ENCODE measurements at regions of chr11 and their contacts with region 1.

Region 1: GRCh38 chr11:116835791-116836631 is 1.4 kb downstream of the APOA1 start:
- DNase-seq: peak; percentile 91
- ATAC-seq: peak; percentile 96
- H3K4me3 Mint-ChIP-seq: peak overlapping the region; percentile 73
- H3K27ac Mint-ChIP-seq: peak overlapping the region; percentile 76
- H3K4me1 Mint-ChIP-seq: peaks cover 20% of the 10 kb centered on the region
- H3K27me3 Mint-ChIP-seq: no peaks in the 10 kb centered on the region

Region 2: GRCh38 chr11:116787786-116788486 is 48.1 kb before region 1 on chr11 and contains the start of gene ZPR1:
- CTCF ChIA-PET with region 1: interaction called, 211 read pairs
- POLR2A ChIA-PET with region 1: interaction called, 13 read pairs
- DNase-seq: peak; percentile 89
- ATAC-seq: peak; percentile 84
- H3K4me3 Mint-ChIP-seq: peak within 1 kb of the TSS; percentile 94
- H3K27ac Mint-ChIP-seq: peak within 1 kb of the TSS; percentile 92
- H3K4me1 Mint-ChIP-seq: peaks cover 49% of the 10 kb centered on the region
- H3K27me3 Mint-ChIP-seq: peaks cover 6% of the 10 kb centered on the region
- total RNA-seq, gene ZPR1: 60.5 to 62.0 TPM

Region 3: GRCh38 chr11:116847612-116848011 is 11.6 kb after region 1 on chr11:
- CTCF ChIA-PET with region 1: interaction called, 95 read pairs
- POLR2A ChIA-PET with region 1: interaction called, 57 read pairs
- DNase-seq: no peak
- ATAC-seq: no peak
- H3K4me3 Mint-ChIP-seq: no peak overlapping the region
- H3K27ac Mint-ChIP-seq: no peak overlapping the region
- H3K4me1 Mint-ChIP-seq: peaks cover 31% of the 10 kb centered on the region
- H3K27me3 Mint-ChIP-seq: no peaks in the 10 kb centered on the region

Region 4: DNA sequence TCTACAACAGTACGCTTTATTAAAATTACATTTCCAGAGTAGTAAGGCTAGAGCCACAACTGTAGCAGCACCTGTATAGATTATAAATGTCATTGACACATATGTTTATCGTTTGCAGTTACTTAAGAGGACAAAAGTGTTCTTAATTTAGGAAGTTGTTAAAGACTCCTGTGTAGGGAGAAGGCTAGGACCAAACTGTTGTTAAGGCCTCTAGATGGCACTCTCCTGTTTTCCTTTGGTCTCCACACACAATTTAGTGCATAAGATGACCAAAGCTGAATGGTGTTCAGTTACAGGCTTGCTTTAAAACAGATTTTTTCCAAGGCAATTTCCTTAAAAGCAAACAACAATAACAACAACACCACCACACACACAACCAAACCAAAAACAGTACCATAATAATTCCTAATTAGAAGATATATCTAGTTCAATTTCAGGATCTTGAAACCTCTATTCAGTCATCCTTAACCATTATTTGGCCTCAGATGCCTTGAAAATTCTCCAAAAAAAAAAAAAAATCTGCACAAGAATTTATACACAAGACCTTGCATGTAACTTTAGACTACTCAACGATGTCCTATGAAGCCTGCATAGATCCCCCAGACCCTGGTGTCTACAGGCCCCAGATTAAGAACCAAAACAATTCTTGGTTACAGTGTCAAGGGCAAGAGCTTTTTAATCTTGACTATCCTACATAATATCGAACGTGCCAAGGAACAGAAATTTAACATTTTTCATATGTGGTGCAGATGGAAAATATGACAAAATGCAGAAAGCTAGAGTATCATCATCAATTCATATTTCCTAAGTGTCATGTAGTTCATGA is 44.0 kb after region 1 on chr11:
- CTCF ChIA-PET with region 1: interaction called, 17 read pairs
- POLR2A ChIA-PET with region 1: no interaction called
- DNase-seq: peak; percentile 55
- ATAC-seq: peak; percentile 75
- H3K4me3 Mint-ChIP-seq: no peak overlapping the region
- H3K27ac Mint-ChIP-seq: peak overlapping the region; percentile 20
- H3K4me1 Mint-ChIP-seq: peaks cover 2% of the 10 kb centered on the region
- H3K27me3 Mint-ChIP-seq: no peaks in the 10 kb centered on the region

Region 5: GRCh38 chr11:116910378-116910777 is 74.4 kb after region 1 on chr11:
- CTCF ChIA-PET with region 1: no interaction called
- POLR2A ChIA-PET with region 1: no interaction called
- DNase-seq: no peak
- ATAC-seq: no peak
- H3K4me3 Mint-ChIP-seq: no peak overlapping the region
- H3K27ac Mint-ChIP-seq: no peak overlapping the region
- H3K4me1 Mint-ChIP-seq: peaks cover 9% of the 10 kb centered on the region
- H3K27me3 Mint-ChIP-seq: no peaks in the 10 kb centered on the region

Region 6: GRCh38 chr11:117098269-117099232 is 262.5 kb after region 1 on chr11 and contains the start of gene SIK3:
- CTCF ChIA-PET with region 1: interaction called, 13 read pairs
- POLR2A ChIA-PET with region 1: interaction called, 4 read pairs
- DNase-seq: peak; percentile 93
- ATAC-seq: peak; percentile 73
- H3K4me3 Mint-ChIP-seq: peak within 1 kb of the TSS; percentile 93
- H3K27ac Mint-ChIP-seq: peak within 1 kb of the TSS; percentile 93
- H3K4me1 Mint-ChIP-seq: peaks cover 44% of the 10 kb centered on the region
- H3K27me3 Mint-ChIP-seq: no peaks in the 10 kb centered on the region
- total RNA-seq, gene SIK3: 25.9 to 31.4 TPM

Measured in activated CD8-positive, alpha-beta T cell treated with anti-CD3 and anti-CD28 coated beads, Interleukin-2, amount 10 ng/mL, durations not matched to agents 7 days and 5 days (primary cell).